ENCODE measurements at regions of chr12 and their contacts with region 1.

Region 1: GRCh38 chr12:101773650-101774162 is 34.4 kb upstream of the SYCP3 start:
- DNase-seq: peak; percentile 53 to 65
- H3K4me3 ChIP-seq: no peak overlapping the region
- H3K4me3 Mint-ChIP-seq: no peak overlapping the region
- H3K27ac Mint-ChIP-seq: no peak overlapping the region
- H3K4me1 ChIP-seq: no peaks in the 10 kb centered on the region
- H3K4me1 Mint-ChIP-seq: peaks cover 7% of the 10 kb centered on the region
- H3K27me3 ChIP-seq: no peaks in the 10 kb centered on the region
- H3K27me3 Mint-ChIP-seq: no peaks in the 10 kb centered on the region
- CTCF ChIP-seq: peak; percentile 84 to 91

Region 2: DNA sequence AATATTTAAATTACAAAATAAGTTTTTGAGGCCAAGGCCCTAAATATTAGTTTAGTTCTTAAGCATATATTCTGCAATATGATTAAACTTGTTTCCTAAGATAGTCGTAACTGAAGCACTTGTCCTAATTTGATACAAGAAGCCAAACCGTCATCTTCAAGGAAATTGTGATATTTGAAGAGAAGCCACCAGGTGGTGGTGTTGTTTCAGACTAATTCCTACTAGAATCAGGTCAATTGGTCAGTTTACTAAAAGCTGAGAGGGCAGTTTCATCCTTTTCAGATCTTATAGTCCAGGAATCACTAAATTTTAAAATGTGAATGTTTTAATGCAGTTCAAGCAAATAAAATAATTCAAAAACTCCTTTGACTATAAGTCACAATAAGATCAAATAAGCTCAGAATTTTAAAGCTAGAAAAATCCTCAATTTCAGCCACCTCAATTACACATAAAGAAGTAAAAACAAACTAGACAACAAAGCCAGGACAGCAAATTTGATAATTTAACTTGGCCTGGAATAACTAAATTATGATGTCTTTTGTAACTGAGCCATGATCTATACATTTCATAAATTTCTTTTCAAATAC is 359.1 kb before region 1 on chr12:
- CTCF ChIA-PET with region 1: no interaction called
- POLR2A ChIA-PET with region 1: no interaction called
- intact Hi-C with region 1: loop called (anchors 2 kb)
- DNase-seq: peak in 1 of 2 experiments; percentile 65
- H3K4me3 ChIP-seq: no peak overlapping the region
- H3K4me3 Mint-ChIP-seq: no peak overlapping the region
- H3K27ac Mint-ChIP-seq: no peak overlapping the region
- H3K4me1 ChIP-seq: no peaks in the 10 kb centered on the region
- H3K4me1 Mint-ChIP-seq: no peaks in the 10 kb centered on the region
- H3K27me3 ChIP-seq: no peaks in the 10 kb centered on the region
- H3K27me3 Mint-ChIP-seq: no peaks in the 10 kb centered on the region
- CTCF ChIP-seq: peak; percentile 42 to 58

Region 3: GRCh38 chr12:101743724-101744472 is 29.8 kb before region 1 on chr12:
- CTCF ChIA-PET with region 1: no interaction called
- POLR2A ChIA-PET with region 1: no interaction called
- intact Hi-C with region 1: no loop called
- DNase-seq: no peak
- H3K4me3 ChIP-seq: no peak overlapping the region
- H3K4me3 Mint-ChIP-seq: no peak overlapping the region
- H3K27ac Mint-ChIP-seq: no peak overlapping the region
- H3K4me1 ChIP-seq: no peaks in the 10 kb centered on the region
- H3K4me1 Mint-ChIP-seq: no peaks in the 10 kb centered on the region
- H3K27me3 ChIP-seq: no peaks in the 10 kb centered on the region
- H3K27me3 Mint-ChIP-seq: no peaks in the 10 kb centered on the region
- CTCF ChIP-seq: no peak

Region 4: GRCh38 chr12:102095675-102096263 is 322.1 kb after region 1 on chr12:
- CTCF ChIA-PET with region 1: no interaction called
- POLR2A ChIA-PET with region 1: no interaction called
- intact Hi-C with region 1: no loop called
- DNase-seq: peak in 1 of 2 experiments; percentile 12
- H3K4me3 ChIP-seq: no peak overlapping the region
- H3K4me3 Mint-ChIP-seq: no peak overlapping the region
- H3K27ac Mint-ChIP-seq: no peak overlapping the region
- H3K4me1 ChIP-seq: no peaks in the 10 kb centered on the region
- H3K4me1 Mint-ChIP-seq: no peaks in the 10 kb centered on the region
- H3K27me3 ChIP-seq: no peaks in the 10 kb centered on the region
- H3K27me3 Mint-ChIP-seq: no peaks in the 10 kb centered on the region
- CTCF ChIP-seq: peak; percentile 44 to 50

Measured in Caco-2 (cell line).